ENCODE measurements at regions of chr11 and their contacts with region 1.

Region 1: GRCh38 chr11:85947431-85948272 is 92.5 kb downstream of the CCDC83 start:
- DNase-seq: peak; percentile 59
- H3K4me3 Mint-ChIP-seq: peak overlapping the region; percentile 30
- H3K27ac Mint-ChIP-seq: peak overlapping the region; percentile 78
- H3K4me1 Mint-ChIP-seq: peaks cover 46% of the 10 kb centered on the region
- H3K27me3 Mint-ChIP-seq: no peaks in the 10 kb centered on the region

Region 2: GRCh38 chr11:85977751-85978160 is 30.1 kb after region 1 on chr11:
- CTCF ChIA-PET with region 1: no interaction called
- POLR2A ChIA-PET with region 1: no interaction called
- intact Hi-C with region 1: no loop called
- DNase-seq: no peak
- H3K4me3 Mint-ChIP-seq: no peak overlapping the region
- H3K27ac Mint-ChIP-seq: no peak overlapping the region
- H3K4me1 Mint-ChIP-seq: peaks cover 11% of the 10 kb centered on the region
- H3K27me3 Mint-ChIP-seq: no peaks in the 10 kb centered on the region

Region 3: GRCh38 chr11:86021377-86021776 is 73.7 kb after region 1 on chr11:
- CTCF ChIA-PET with region 1: no interaction called
- POLR2A ChIA-PET with region 1: no interaction called
- intact Hi-C with region 1: loop called (anchors 1 kb)
- DNase-seq: no peak
- H3K4me3 Mint-ChIP-seq: no peak overlapping the region
- H3K27ac Mint-ChIP-seq: peak overlapping the region; percentile 33
- H3K4me1 Mint-ChIP-seq: peaks cover 46% of the 10 kb centered on the region
- H3K27me3 Mint-ChIP-seq: no peaks in the 10 kb centered on the region

Region 4: GRCh38 chr11:86116386-86116726 is 168.7 kb after region 1 on chr11:
- CTCF ChIA-PET with region 1: no interaction called
- POLR2A ChIA-PET with region 1: no interaction called
- intact Hi-C with region 1: loop called (anchors 5 kb)
- DNase-seq: peak; percentile 59
- H3K4me3 Mint-ChIP-seq: peak overlapping the region; percentile 40
- H3K27ac Mint-ChIP-seq: peak overlapping the region; percentile 44
- H3K4me1 Mint-ChIP-seq: peaks cover 34% of the 10 kb centered on the region
- H3K27me3 Mint-ChIP-seq: peaks cover 2% of the 10 kb centered on the region

Region 5: DNA sequence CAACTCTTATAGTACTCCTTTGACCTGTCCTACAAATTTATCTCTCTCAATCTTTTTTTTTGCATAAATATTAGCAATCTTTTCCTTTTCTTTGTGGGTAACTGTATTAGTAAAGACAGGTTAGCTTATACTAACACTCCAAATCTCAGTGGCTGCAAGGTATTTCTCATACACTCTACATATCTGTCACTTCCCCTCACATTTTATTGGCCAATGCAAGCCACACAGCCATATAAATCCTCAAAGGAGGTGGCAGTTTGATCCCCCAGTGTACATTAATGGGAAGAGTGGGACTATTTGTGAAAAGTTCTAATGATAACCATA is 254.3 kb after region 1 on chr11:
- CTCF ChIA-PET with region 1: no interaction called
- POLR2A ChIA-PET with region 1: no interaction called
- intact Hi-C with region 1: loop called (anchors 2 kb)
- DNase-seq: peak; percentile 38
- H3K4me3 Mint-ChIP-seq: no peak overlapping the region
- H3K27ac Mint-ChIP-seq: no peak overlapping the region
- H3K4me1 Mint-ChIP-seq: peaks cover 5% of the 10 kb centered on the region
- H3K27me3 Mint-ChIP-seq: no peaks in the 10 kb centered on the region

Region 6: DNA sequence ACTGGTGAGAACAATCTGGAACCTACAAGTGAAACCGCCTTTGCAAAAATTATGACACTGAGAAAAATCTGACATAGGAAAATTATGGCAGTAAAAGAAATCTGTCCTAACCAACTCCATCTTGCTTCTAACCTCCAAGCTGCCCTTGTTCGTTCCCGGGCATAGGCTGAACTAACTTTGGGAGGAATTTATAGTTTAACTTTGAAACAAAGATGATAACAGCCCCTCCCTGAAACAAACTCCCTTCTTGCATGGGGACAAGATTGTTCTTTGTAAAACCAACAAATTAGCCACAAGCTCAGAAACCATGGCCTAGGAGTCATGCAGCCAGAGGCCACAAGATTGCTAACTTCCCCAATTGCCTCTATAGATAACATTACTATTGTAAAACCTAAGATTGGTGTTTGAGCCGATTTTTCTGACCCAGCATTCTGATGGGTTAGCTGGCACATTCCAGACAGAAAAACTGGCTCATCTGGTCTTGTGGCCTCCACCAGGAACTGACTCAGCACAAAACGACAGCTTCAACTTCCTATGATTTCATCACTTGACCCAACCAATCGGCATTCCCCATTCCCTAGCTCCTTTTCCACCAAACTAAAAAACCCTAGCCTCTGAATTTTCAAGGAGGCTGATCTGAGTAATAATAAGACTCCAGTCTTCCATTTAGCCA is 423.4 kb after region 1 on chr11:
- CTCF ChIA-PET with region 1: no interaction called
- POLR2A ChIA-PET with region 1: no interaction called
- intact Hi-C with region 1: no loop called
- DNase-seq: no peak
- H3K4me3 Mint-ChIP-seq: no peak overlapping the region
- H3K27ac Mint-ChIP-seq: no peak overlapping the region
- H3K4me1 Mint-ChIP-seq: peaks cover 4% of the 10 kb centered on the region
- H3K27me3 Mint-ChIP-seq: peaks cover 9% of the 10 kb centered on the region

Region 7: DNA sequence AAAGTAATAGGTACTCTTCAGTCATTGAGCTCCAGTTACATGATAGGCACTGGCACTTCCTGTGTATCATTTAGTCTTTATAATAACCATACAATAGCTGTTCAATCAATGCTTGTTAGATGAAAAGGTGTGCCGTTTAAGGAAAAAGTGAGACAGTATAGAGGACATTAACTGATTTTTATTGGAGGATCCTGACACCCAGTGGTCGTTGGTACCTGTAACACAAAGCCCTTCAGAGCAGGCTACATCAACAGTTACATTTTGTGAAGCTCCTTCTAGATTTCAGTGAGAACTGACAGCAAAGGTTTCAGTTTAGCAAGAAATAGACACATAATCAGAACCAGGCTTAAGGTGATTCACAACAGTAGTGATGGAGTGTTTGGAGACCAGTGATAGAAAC is 471.3 kb after region 1 on chr11:
- CTCF ChIA-PET with region 1: no interaction called
- POLR2A ChIA-PET with region 1: no interaction called
- intact Hi-C with region 1: loop called (anchors 5 kb)
- DNase-seq: peak; percentile 12
- H3K4me3 Mint-ChIP-seq: no peak overlapping the region
- H3K27ac Mint-ChIP-seq: no peak overlapping the region
- H3K4me1 Mint-ChIP-seq: peaks cover 6% of the 10 kb centered on the region
- H3K27me3 Mint-ChIP-seq: no peaks in the 10 kb centered on the region